ENCODE measurements at regions of chr2 and their contacts with region 1.

Region 1: GRCh38 chr2:205903638-205904037 is 182.3 kb downstream of the INO80D start:
- DNase-seq: no peak
- H3K4me3 ChIP-seq: no peak overlapping the region
- H3K27ac ChIP-seq: no peak overlapping the region
- H3K4me1 ChIP-seq: no peaks in the 10 kb centered on the region
- H3K27me3 ChIP-seq: no peaks in the 10 kb centered on the region
- CTCF ChIP-seq: peak in 1 of 3 donors; percentile 39
- POLR2A ChIP-seq: no peak

Region 2: GRCh38 chr2:204749319-204749718 is 1154.3 kb before region 1 on chr2:
- intact Hi-C with region 1: no loop called
- DNase-seq: no peak
- H3K4me3 ChIP-seq: no peak overlapping the region
- H3K27ac ChIP-seq: no peak overlapping the region
- H3K4me1 ChIP-seq: no peaks in the 10 kb centered on the region
- H3K27me3 ChIP-seq: no peaks in the 10 kb centered on the region
- CTCF ChIP-seq: no peak
- POLR2A ChIP-seq: no peak

Region 3: DNA sequence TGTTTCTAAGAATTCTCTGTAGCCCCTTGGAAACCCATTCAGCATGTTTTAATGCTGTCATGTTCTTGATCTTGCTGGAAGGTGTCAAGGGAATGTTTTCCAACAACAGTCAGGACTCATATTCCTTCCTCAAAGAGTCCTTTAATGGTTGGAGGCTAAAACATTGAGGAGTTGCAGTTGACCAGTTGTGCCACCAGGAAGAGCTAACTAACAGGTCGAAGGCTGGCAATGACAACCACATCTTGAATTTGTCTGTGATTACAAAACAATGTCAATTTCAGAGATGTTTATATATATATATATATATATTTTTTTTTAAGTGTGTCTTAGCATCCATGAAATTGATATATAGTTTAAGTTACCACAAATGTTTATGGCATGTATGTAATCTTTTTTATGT is 30.8 kb after region 1 on chr2:
- intact Hi-C with region 1: loop called (anchors 2 kb)
- DNase-seq: no peak
- H3K4me3 ChIP-seq: no peak overlapping the region
- H3K27ac ChIP-seq: no peak overlapping the region
- H3K4me1 ChIP-seq: no peaks in the 10 kb centered on the region
- H3K27me3 ChIP-seq: no peaks in the 10 kb centered on the region
- CTCF ChIP-seq: no peak
- POLR2A ChIP-seq: no peak

Region 4: DNA sequence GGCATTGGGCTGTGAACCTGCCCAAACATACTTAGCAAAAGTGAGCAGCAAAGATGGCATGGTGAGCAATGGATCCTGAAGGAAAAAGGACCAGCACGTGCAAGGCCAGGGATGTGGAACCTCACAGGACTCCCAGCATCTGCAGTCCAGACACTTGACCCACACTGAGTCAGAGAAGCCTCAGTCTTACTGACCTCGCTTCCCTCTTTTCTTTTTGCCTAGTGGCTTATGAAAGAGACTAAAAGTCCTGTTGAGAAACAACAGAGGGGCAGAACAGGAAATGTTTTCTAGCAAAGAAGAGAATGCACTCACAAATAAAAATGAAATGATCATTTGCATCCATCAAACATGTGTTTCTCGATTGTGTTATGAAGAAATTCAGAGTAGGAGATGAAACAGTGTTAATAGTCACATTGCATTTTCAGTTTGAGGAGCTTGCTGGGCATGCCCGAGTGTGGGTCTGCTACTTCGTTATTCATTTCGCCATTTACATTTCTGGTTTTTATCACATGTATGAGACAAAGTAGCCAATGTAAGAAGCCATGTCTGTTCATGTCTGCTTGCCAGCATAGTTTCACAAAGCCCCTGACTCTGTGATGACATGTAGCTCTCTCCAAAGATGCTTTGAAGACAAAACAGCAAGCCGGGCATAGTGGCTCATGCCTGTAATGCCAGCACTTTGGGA is 63.9 kb after region 1 on chr2:
- intact Hi-C with region 1: no loop called
- DNase-seq: no peak
- H3K4me3 ChIP-seq: no peak overlapping the region
- H3K27ac ChIP-seq: no peak overlapping the region
- H3K4me1 ChIP-seq: no peaks in the 10 kb centered on the region
- H3K27me3 ChIP-seq: no peaks in the 10 kb centered on the region
- CTCF ChIP-seq: no peak
- POLR2A ChIP-seq: no peak

Region 5: GRCh38 chr2:205995260-205995659 is 91.6 kb after region 1 on chr2:
- intact Hi-C with region 1: no loop called
- DNase-seq: no peak
- H3K4me3 ChIP-seq: no peak overlapping the region
- H3K27ac ChIP-seq: no peak overlapping the region
- H3K4me1 ChIP-seq: no peaks in the 10 kb centered on the region
- H3K27me3 ChIP-seq: no peaks in the 10 kb centered on the region
- CTCF ChIP-seq: no peak
- POLR2A ChIP-seq: no peak

Region 6: GRCh38 chr2:206814498-206814897 is 910.9 kb after region 1 on chr2:
- intact Hi-C with region 1: no loop called
- DNase-seq: no peak
- H3K4me3 ChIP-seq: no peak overlapping the region
- H3K27ac ChIP-seq: no peak overlapping the region
- H3K4me1 ChIP-seq: no peaks in the 10 kb centered on the region
- H3K27me3 ChIP-seq: no peaks in the 10 kb centered on the region
- CTCF ChIP-seq: no peak
- POLR2A ChIP-seq: no peak

Measured in breast epithelium (tissue), 4 donors.